ENCODE measurements at regions of chr13 and their contacts with region 1.

Region 1: GRCh38 chr13:78806457-78806856 is 147.5 kb upstream of the OBI1 start:
- DNase-seq: peak; percentile 11
- H3K4me3 ChIP-seq: no peak overlapping the region
- H3K27ac ChIP-seq: no peak overlapping the region
- H3K4me1 ChIP-seq: no peaks in the 10 kb centered on the region
- H3K27me3 ChIP-seq: no peaks in the 10 kb centered on the region
- CTCF ChIP-seq: peak; percentile 5 to 51
- POLR2A ChIP-seq: no peak

Region 2: DNA sequence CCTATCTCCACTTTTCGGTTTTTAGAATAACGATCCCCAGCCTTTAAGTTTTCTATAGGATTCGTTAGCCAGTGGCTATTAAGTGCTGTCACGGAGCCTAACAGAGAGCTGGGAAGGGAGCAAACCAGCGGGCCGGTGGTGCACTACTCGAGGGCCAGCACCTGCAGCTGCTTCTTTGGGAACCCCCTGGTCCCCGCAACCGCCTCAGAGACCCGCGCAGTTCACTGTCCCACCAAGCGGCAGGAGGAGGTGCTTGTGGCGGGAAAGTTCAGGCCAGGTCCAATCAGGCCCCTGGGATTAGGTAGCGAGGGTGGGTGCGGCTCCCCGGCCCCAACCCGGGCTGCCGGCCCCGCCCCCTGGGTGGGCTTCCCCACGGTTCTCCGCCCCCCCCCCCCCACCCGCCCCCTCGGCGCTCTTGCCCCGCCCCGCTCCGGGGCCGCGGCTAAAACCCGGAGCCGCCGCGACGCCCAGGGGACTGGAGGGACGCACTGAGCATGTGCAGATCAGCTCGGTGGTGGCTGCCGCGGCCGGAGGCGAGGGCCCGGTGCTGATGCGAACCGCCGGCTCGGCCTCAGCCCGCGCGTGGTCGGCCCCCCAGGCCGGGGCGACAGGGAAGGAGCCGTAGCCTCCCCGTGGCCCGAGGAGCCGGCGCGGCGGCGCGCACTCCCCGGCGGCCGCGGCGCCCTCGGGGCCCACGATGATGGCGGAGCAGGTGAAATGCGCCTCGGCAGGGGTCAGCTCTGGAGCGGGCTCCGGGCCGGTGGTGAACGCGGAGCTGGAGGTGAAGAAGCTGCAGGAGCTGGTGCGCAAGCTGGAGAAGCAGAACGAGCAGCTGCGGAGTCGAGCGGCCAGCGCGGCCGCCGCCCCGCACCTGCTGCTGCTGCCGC is 1109.0 kb before region 1 on chr13 and contains the start of gene SLAIN1:
- CTCF ChIA-PET with region 1: no interaction called
- POLR2A ChIA-PET with region 1: no interaction called
- dilution Hi-C with region 1: no loop called
- intact Hi-C with region 1: loop called (anchors 5 kb)
- DNase-seq: peak; percentile 61
- H3K4me3 ChIP-seq: peak within 1 kb of the TSS; percentile 65 to 87 (median 75)
- H3K27ac ChIP-seq: no peak within 1 kb of the TSS
- H3K4me1 ChIP-seq: no peaks in the 10 kb centered on the region
- H3K27me3 ChIP-seq: peaks cover 7 to 26% of the 10 kb centered on the region in 2 experiments
- CTCF ChIP-seq: no peak
- POLR2A ChIP-seq: no peak
- total RNA-seq, gene SLAIN1: 4.3 and 4.5 TPM in 2 replicates

Region 3: GRCh38 chr13:78827471-78827870 is 21.0 kb after region 1 on chr13:
- CTCF ChIA-PET with region 1: no interaction called
- POLR2A ChIA-PET with region 1: no interaction called
- dilution Hi-C with region 1: no loop called
- intact Hi-C with region 1: no loop called
- DNase-seq: no peak
- H3K4me3 ChIP-seq: no peak overlapping the region
- H3K27ac ChIP-seq: no peak overlapping the region
- H3K4me1 ChIP-seq: no peaks in the 10 kb centered on the region
- H3K27me3 ChIP-seq: no peaks in the 10 kb centered on the region
- CTCF ChIP-seq: no peak
- POLR2A ChIP-seq: no peak